ENCODE measurements at regions of chr2 and their contacts with region 1.

Region 1: GRCh38 chr2:182980115-182980514 is 58.1 kb downstream of the NCKAP1 start:
- DNase-seq: peak; percentile 21
- H3K4me3 Mint-ChIP-seq: no peak overlapping the region
- H3K27ac Mint-ChIP-seq: no peak overlapping the region
- H3K4me1 Mint-ChIP-seq: no peaks in the 10 kb centered on the region
- H3K27me3 Mint-ChIP-seq: no peaks in the 10 kb centered on the region
- CTCF ChIP-seq: peak; percentile 33

Region 2: DNA sequence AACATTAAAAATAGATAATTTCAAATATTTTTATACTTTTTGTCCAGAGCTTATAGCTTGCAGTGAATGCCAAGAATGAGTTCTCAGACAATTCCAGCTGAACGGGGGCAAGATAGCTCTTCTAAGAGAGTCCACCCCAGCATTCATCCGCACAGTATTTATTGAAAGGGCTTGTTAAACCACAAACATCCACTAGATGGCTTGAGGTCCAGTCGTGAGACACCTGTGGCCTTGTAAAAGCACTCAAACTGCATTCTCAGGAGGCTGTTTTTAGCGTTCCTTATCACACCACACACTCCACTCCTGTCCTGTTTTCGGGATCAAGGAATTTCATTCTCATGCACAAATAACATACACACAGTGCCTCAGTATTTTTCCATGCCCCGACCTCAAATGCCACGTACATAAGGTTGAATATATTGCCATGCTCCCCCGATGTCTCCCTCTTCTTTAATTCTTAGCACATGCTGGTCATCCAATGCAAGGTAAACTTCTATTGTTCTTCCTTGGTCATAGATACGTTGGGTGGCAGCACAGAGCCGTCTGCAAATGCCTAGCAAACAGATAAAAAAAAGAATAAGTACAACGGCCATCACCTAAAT is 216.7 kb before region 1 on chr2:
- CTCF ChIA-PET with region 1: interaction called, 26 read pairs
- POLR2A ChIA-PET with region 1: interaction called, 4 read pairs
- intact Hi-C with region 1: loop called (anchors 5 kb)
- DNase-seq: peak; percentile 56
- H3K4me3 Mint-ChIP-seq: no peak overlapping the region
- H3K27ac Mint-ChIP-seq: no peak overlapping the region
- H3K4me1 Mint-ChIP-seq: peaks cover 14% of the 10 kb centered on the region
- H3K27me3 Mint-ChIP-seq: no peaks in the 10 kb centered on the region
- CTCF ChIP-seq: peak; percentile 52

Region 3: GRCh38 chr2:182784777-182785176 is 195.3 kb before region 1 on chr2:
- CTCF ChIA-PET with region 1: interaction called, 10 read pairs
- POLR2A ChIA-PET with region 1: interaction called, 3 read pairs
- intact Hi-C with region 1: loop called (anchors 5 kb)
- DNase-seq: peak; percentile 34
- H3K4me3 Mint-ChIP-seq: no peak overlapping the region
- H3K27ac Mint-ChIP-seq: no peak overlapping the region
- H3K4me1 Mint-ChIP-seq: no peaks in the 10 kb centered on the region
- H3K27me3 Mint-ChIP-seq: no peaks in the 10 kb centered on the region
- CTCF ChIP-seq: peak; percentile 49

Region 4: DNA sequence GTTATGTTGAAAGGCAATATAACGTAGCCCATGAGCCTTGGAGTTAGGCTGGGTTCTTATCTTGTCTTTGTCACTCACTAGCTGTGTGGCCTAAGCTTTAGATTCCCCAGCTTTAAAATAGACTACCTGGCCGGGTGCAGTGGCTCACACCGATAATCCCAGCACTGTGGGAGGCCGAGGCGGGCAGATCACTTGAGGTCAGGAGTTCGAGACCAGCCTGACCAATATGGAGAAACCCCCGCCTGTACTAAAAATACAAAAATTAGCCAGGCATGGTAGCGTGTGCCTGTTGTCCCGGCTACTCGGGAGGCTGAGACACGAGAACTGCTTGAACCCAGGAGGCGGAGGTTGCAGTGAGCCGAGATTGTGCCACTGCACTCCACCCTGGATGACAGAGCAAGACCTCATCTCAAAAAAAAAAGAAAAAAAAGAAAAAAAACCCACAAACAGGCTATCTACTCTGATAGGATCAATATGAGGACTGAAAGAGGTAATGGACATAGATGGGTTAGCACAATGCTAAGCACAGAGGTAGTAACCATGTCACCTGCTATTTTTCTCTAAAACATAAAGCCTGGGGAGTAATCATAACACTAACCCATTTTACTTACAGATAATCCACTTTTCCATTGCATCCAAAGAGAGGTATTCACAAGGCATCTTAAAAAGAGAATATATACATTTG is 14.3 kb after region 1 on chr2:
- CTCF ChIA-PET with region 1: interaction called, 23 read pairs
- POLR2A ChIA-PET with region 1: interaction called, 3 read pairs
- intact Hi-C with region 1: no loop called
- DNase-seq: no peak
- H3K4me3 Mint-ChIP-seq: no peak overlapping the region
- H3K27ac Mint-ChIP-seq: no peak overlapping the region
- H3K4me1 Mint-ChIP-seq: no peaks in the 10 kb centered on the region
- H3K27me3 Mint-ChIP-seq: no peaks in the 10 kb centered on the region
- CTCF ChIP-seq: no peak

Measured in MCF 10A (cell line).